Heart left ventricle (tissue), 16 donors: ENCODE measurements at regions of chr2 and their contacts with region 1.

Region 1: DNA sequence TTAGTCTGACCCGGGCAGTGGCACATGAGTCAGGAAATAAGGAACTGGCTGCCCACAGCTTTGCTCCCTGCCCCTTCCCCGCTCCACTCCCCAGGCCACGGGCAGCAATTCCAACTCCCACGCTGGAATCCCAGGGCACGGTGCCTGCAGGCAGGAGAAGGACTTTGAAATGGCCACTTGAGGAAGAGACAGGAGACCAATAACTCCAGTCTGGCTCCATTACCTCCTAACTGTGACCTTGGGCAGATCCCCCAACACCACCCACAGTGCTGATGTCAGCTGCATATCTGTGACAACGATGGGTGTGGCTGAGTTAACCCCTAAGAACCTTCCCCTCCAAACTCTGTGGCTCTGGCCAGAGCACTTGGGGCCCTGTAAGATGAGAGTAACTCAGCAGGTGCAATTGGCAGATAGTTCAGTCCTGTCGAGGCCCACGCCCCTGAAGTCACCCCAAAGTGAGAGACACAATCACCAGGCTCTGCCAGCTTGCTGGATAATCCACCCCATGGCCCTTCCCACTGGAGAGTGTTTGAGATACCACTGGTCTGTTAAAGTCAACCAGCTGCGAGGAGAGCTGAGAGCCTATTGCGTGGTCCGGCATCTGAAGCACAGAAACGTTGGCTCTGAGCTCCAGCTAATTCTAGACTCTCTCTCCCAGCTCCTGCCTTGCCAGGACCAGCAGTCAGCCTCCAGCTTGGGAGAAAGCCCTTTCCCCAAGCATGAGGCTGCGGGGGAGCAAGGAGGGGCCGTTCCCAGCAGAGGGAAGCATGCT is 175.2 kb downstream of the TNS1 start:
- DNase-seq: peak; percentile 69 to 80 (median 75)
- ATAC-seq: peak; percentile 45 to 72 (median 66)
- H3K4me3 ChIP-seq: no peak overlapping the region
- H3K27ac ChIP-seq: peak overlapping the region; percentile 47 to 93 (median 82)
- H3K4me1 ChIP-seq: peaks cover 19 to 100% (median 76%) of the 10 kb centered on the region in 12 donors
- H3K27me3 ChIP-seq: no peaks in the 10 kb centered on the region
- CTCF ChIP-seq: no peak
- POLR2A ChIP-seq: no peak

Region 2: DNA sequence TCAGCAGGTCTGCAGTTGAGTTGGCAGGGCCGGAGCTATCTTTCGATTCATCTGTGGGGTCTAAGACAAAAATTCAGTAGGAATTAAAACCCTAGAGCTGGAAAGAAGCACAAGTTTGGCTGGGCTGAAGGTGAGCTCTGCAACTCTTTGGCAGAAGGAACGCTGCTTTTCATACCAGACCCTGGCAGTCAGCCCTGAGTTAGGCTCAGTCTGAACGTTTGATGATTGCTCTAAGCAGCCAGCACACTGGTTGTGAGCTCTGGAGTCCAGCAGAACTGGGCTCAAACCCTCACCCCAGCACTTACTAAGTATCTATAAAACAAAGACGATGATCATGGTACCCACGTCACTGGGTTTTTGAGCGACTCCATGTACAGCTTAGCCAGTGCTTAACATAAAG is 17.4 kb before region 1 on chr2:
- intact Hi-C with region 1: loop called in 2 of 10 experiments (anchors 2 kb)
- DNase-seq: peak in 1 of 5 donors; percentile 34
- ATAC-seq: peak in 3 of 4 donors; percentile 19 to 55 (median 25)
- H3K4me3 ChIP-seq: no peak overlapping the region
- H3K27ac ChIP-seq: no peak overlapping the region
- H3K4me1 ChIP-seq: peaks cover 3 to 88% (median 56%) of the 10 kb centered on the region in 12 donors
- H3K27me3 ChIP-seq: no peaks in the 10 kb centered on the region
- CTCF ChIP-seq: no peak
- POLR2A ChIP-seq: no peak

Region 3: GRCh38 chr2:217851191-217852020 is 23.8 kb after region 1 on chr2:
- intact Hi-C with region 1: loop called in 1 of 10 experiments (anchors 2 kb)
- DNase-seq: peak in 3 of 5 donors; percentile 57 to 73 (median 60)
- ATAC-seq: peak; percentile 9 to 60 (median 32)
- H3K4me3 ChIP-seq: peak overlapping the region in 1 of 12 donors; percentile 24
- H3K27ac ChIP-seq: peak overlapping the region; percentile 52 to 98 (median 80)
- H3K4me1 ChIP-seq: peaks cover 24 to 100% (median 90%) of the 10 kb centered on the region in 12 donors
- H3K27me3 ChIP-seq: no peaks in the 10 kb centered on the region
- CTCF ChIP-seq: no peak
- POLR2A ChIP-seq: no peak

Region 4: GRCh38 chr2:217864963-217865772 is 37.6 kb after region 1 on chr2:
- intact Hi-C with region 1: loop called in 1 of 10 experiments (anchors 5 kb)
- DNase-seq: no peak
- ATAC-seq: peak in 1 of 4 donors; percentile 3
- H3K4me3 ChIP-seq: no peak overlapping the region
- H3K27ac ChIP-seq: peak overlapping the region in 2 of 12 donors; percentile 13 to 14
- H3K4me1 ChIP-seq: peaks cover 2 to 86% (median 51%) of the 10 kb centered on the region in 12 donors
- H3K27me3 ChIP-seq: no peaks in the 10 kb centered on the region
- CTCF ChIP-seq: no peak
- POLR2A ChIP-seq: no peak

Region 5: DNA sequence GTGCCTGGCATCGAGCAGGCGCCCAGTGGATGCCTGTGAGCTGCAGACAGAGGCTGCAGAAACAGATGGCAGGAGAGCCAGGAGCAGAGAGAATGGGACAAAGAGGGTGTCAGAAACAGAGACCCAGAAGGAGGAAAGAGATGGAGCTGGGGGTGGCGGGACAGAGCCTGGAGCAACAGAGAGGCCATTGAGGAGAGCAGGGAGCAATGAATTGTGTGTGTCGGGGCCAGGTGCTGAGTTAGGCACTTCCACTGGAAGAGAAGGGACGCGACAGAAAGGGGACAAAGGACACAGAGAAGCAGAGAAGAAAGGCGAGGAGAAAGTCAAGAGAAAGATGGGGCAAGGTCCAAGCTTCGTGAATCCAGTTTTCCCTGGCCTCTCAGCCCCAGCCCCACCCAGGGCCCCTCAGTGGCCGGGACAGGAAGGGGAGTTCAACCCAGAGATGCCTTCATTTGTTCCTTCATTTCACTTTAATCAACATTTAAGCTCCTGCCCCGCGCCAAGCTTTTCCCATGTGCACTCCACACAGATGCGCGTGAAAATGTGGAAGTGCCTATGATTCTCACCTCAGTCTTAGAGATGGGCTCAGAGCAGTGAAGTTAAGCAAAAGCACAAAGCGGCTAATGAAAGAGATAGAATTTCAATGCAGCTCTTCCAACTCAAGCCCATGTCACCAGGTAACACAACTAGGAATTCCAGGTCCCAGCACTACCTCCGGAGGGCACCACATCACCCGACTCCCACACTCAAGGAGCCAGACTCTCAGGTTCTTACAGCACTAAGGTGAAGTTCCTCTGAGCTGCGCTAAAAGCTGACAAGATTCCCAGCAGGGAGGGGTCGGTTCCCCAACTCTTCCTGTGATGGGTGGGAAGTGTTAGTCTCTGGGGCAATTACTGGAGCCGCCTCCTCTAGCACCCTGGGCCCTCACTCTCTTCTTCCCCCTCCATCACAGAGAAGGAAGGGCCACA is 120.1 kb after region 1 on chr2:
- intact Hi-C with region 1: no loop called
- DNase-seq: peak in 3 of 5 donors; percentile 7 to 31 (median 11)
- ATAC-seq: no peak
- H3K4me3 ChIP-seq: no peak overlapping the region
- H3K27ac ChIP-seq: peak overlapping the region in 2 of 12 donors; percentile 18 to 97
- H3K4me1 ChIP-seq: peaks cover 5 to 81% (median 51%) of the 10 kb centered on the region in 12 donors
- H3K27me3 ChIP-seq: no peaks in the 10 kb centered on the region
- CTCF ChIP-seq: peak in 1 of 12 donors; percentile 13
- POLR2A ChIP-seq: no peak

Region 6: DNA sequence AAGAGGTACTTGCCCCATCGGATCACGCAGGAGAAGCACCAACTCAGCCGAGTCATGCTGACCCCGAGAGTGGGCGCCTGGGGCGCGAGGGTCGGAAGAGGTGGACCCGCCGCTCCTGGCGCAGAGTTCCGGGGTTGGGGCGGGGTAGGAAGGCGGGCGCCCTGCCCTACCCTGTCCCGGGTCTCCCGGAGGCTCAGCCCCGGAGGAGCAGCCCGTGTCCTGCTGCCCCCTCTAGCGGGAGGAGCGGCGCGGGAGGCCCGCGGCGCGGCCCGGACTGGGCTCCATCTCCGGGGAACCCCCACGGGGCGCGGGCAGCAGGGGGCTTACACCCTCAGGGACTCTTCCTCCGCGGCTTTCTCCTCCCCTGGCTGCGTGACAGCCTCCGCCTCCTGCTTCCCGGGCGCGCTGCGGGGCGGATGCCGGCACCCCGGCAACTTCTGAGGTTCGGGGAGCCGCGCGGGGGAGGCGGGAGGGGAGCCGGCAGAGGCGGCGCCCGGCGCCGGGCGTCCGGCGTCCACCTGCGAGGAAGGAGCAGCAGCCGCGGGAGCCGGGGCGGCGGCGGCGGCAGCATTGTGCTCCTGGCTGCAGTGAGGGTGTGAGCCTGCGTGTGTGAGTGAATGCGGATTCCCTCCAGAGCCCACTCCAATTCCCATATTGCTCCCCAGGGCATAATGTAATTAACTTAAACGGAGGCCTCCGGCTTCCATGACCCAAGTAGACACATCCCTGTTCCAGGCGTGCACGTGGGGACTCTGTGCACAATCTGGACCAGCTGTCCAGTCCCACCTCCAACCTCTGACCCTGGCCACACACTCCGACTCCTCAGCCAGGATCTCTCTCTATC is 182.7 kb after region 1 on chr2:
- intact Hi-C with region 1: no loop called
- DNase-seq: peak; percentile 54 to 81 (median 59)
- ATAC-seq: peak; percentile 50 to 81 (median 78)
- H3K4me3 ChIP-seq: peak overlapping the region; percentile 34 to 65 (median 55)
- H3K27ac ChIP-seq: peak overlapping the region in 4 of 12 donors; percentile 31 to 46 (median 38)
- H3K4me1 ChIP-seq: peaks cover 0 to 34% (median 20%) of the 10 kb centered on the region in 12 donors
- H3K27me3 ChIP-seq: peaks cover 0 to 20% (median 0%) of the 10 kb centered on the region in 9 donors
- CTCF ChIP-seq: peak; percentile 35 to 79 (median 58)
- POLR2A ChIP-seq: no peak